Lower leg skin (tissue), 4 donors: ENCODE measurements at regions of chr17 and their contacts with region 1.

Region 1: GRCh38 chr17:81018044-81018802 is 16.7 kb upstream of the BAIAP2 start:
- DNase-seq: no peak
- H3K4me3 ChIP-seq: peak overlapping the region; percentile 1
- CTCF ChIP-seq: no peak
- POLR2A ChIP-seq: no peak

Region 2: DNA sequence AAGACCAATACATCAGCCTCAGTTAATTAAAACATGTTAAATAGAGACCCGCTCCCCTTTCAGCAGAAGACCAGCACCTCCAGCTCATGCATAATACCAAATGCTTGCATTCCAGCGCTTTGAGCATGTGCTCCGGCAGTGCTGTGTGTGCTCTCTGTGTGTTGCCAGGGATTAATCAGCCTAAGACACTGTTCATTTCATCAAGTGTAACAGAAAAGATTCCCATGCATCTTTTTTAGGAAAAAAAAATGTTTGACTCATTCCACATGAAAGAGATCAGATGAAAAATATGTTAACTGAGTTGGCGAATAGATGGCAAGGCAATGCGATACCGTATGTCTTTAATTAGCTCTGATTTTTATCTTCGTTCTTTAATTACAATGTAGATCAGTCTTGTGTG is 286.0 kb before region 1 on chr17:
- intact Hi-C with region 1: no loop called
- DNase-seq: no peak
- H3K4me3 ChIP-seq: no peak overlapping the region
- CTCF ChIP-seq: no peak
- POLR2A ChIP-seq: no peak

Region 3: GRCh38 chr17:80959330-80960036 is 58.7 kb before region 1 on chr17:
- intact Hi-C with region 1: no loop called
- DNase-seq: peak; percentile 64 to 91
- H3K4me3 ChIP-seq: no peak overlapping the region
- CTCF ChIP-seq: no peak
- POLR2A ChIP-seq: no peak

Region 4: GRCh38 chr17:80981062-80981902 is 36.9 kb before region 1 on chr17:
- intact Hi-C with region 1: no loop called
- DNase-seq: no peak
- H3K4me3 ChIP-seq: no peak overlapping the region
- CTCF ChIP-seq: no peak
- POLR2A ChIP-seq: no peak

Region 5: GRCh38 chr17:81094509-81095382 is 76.5 kb after region 1 on chr17:
- intact Hi-C with region 1: loop called (anchors 5 kb)
- DNase-seq: peak; percentile 91 to 97
- H3K4me3 ChIP-seq: no peak overlapping the region
- CTCF ChIP-seq: no peak
- POLR2A ChIP-seq: no peak

Region 6: GRCh38 chr17:81238817-81239600 is 220.8 kb after region 1 on chr17 and contains the starts of genes NDUFAF8 and TEPSIN:
- intact Hi-C with region 1: loop called (anchors 10 kb)
- DNase-seq: peak; percentile 99
- H3K4me3 ChIP-seq: peak within 1 kb of the TSS; percentile 93
- CTCF ChIP-seq: no peak
- POLR2A ChIP-seq: no peak
- total RNA-seq, gene NDUFAF8: 10.0 to 30.4 (median 15.9) TPM
- total RNA-seq, gene TEPSIN: 40.7 to 104 (median 62.6) TPM

Region 7: GRCh38 chr17:81494626-81495385 is 476.6 kb after region 1 on chr17:
- intact Hi-C with region 1: loop called (anchors 10 kb)
- DNase-seq: no peak
- H3K4me3 ChIP-seq: no peak overlapping the region
- CTCF ChIP-seq: no peak
- POLR2A ChIP-seq: no peak